Activated CD4-positive, alpha-beta T cell treated with anti-CD3 and anti-CD28 coated beads for 36 hours (primary cell): ENCODE measurements at regions of chr16 and their contacts with region 1.

Region 1: DNA sequence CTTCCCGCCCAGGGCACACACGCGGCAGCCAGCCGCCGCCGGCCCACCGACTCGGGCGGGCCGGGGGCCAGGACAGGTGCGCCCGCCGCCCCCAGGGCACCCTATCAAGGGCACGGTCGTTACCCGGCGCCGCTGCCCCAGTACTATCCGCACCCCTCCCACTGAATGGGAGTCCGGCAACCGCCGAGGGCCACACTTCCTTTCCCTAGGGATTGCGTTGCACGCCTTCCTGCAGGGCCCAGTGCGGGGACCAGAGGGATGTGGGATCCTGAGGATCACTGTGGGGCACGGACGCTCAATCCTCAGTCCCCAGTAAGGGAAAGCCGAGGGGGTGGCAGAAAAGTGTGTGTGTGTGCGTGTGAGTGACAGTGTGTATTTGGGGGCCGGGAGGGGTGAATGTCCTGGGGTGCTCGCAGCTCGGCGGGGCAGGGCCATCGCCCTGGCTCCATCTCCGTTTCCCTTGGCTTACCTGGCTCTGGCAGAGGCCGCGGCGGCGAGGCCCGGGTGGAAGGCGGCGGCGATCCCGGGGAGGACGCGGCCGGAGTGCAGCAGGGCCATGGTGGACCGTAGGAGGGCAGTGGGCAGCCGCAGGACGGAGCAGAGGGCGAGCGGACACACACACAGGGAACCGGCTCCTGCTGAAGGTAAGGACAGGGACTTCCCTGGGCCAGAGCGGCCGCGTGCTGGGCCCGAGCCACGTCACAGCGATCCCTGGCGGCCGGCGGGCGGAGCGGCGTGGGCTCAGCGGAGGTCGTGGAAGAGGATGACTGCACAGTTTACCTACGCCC is at the start of gene GOT2:
- DNase-seq: peak; percentile 90
- ATAC-seq: peak; percentile 92
- H3K4me3 Mint-ChIP-seq: peak within 1 kb of the TSS; percentile 92
- H3K27ac Mint-ChIP-seq: peak within 1 kb of the TSS; percentile 97
- H3K4me1 Mint-ChIP-seq: peaks cover 42% of the 10 kb centered on the region
- H3K27me3 Mint-ChIP-seq: no peaks in the 10 kb centered on the region
- total RNA-seq, gene GOT2: 128 to 133 TPM

Region 2: GRCh38 chr16:58198022-58198683 is 535.7 kb before region 1 on chr16 and contains the start of gene CSNK2A2:
- CTCF ChIA-PET with region 1: no interaction called
- POLR2A ChIA-PET with region 1: no interaction called
- intact Hi-C with region 1: loop called in 1 of 2 experiments (anchors 10 kb)
- DNase-seq: peak; percentile 84
- ATAC-seq: peak; percentile 94
- H3K4me3 Mint-ChIP-seq: peak within 1 kb of the TSS; percentile 84
- H3K27ac Mint-ChIP-seq: peak within 1 kb of the TSS; percentile 74
- H3K4me1 Mint-ChIP-seq: peaks cover 34% of the 10 kb centered on the region
- H3K27me3 Mint-ChIP-seq: peaks cover 6% of the 10 kb centered on the region
- total RNA-seq, gene CSNK2A2: 85.9 to 92.2 TPM

Region 3: GRCh38 chr16:58249780-58250478 is 483.9 kb before region 1 on chr16:
- CTCF ChIA-PET with region 1: no interaction called
- POLR2A ChIA-PET with region 1: no interaction called
- intact Hi-C with region 1: loop called in 1 of 2 experiments (anchors 5 kb)
- DNase-seq: peak; percentile 92
- ATAC-seq: peak; percentile 98
- H3K4me3 Mint-ChIP-seq: peak overlapping the region; percentile 81
- H3K27ac Mint-ChIP-seq: peak overlapping the region; percentile 85
- H3K4me1 Mint-ChIP-seq: peaks cover 8% of the 10 kb centered on the region
- H3K27me3 Mint-ChIP-seq: no peaks in the 10 kb centered on the region

Region 4: DNA sequence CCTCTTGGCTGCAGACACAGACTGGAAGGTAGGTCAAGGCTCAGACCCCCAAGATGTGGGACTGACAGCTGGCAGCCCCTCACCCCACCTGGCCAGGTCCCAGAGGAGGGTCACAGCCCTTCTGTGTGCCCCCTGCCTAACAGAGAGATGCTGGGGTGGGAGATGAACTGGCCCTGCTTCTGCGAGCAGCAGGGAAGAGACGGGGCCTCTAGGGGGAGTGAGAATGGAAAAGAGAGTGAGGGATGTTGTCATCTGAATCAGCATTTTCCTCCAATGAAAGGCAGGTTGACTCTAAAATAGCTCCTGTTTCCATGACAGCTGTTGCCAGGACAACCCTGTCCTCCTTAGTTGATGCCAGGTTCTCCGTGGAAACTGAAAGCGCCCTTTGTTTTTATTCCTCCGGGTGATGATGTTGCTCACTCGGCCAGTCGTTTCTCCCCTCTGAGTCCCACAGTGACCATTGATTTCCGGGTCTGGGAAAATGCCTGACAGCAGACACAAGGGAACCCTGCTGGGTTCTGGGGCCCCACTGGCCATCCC is 238.8 kb before region 1 on chr16:
- CTCF ChIA-PET with region 1: interaction called, 3 read pairs
- POLR2A ChIA-PET with region 1: no interaction called
- intact Hi-C with region 1: loop called in 1 of 2 experiments (anchors 1 kb)
- DNase-seq: peak; percentile 91
- ATAC-seq: peak; percentile 76
- H3K4me3 Mint-ChIP-seq: peak overlapping the region; percentile 17
- H3K27ac Mint-ChIP-seq: peak overlapping the region; percentile 37
- H3K4me1 Mint-ChIP-seq: peaks cover 19% of the 10 kb centered on the region
- H3K27me3 Mint-ChIP-seq: no peaks in the 10 kb centered on the region

Region 5: GRCh38 chr16:58684354-58685083 is 49.3 kb before region 1 on chr16 and contains the start of gene SLC38A7:
- CTCF ChIA-PET with region 1: interaction called, 4 read pairs
- POLR2A ChIA-PET with region 1: no interaction called
- intact Hi-C with region 1: loop called in 1 of 2 experiments (anchors 1 kb)
- DNase-seq: peak; percentile 88
- ATAC-seq: peak; percentile 93
- H3K4me3 Mint-ChIP-seq: peak within 1 kb of the TSS; percentile 86
- H3K27ac Mint-ChIP-seq: peak within 1 kb of the TSS; percentile 74
- H3K4me1 Mint-ChIP-seq: peaks cover 19% of the 10 kb centered on the region
- H3K27me3 Mint-ChIP-seq: no peaks in the 10 kb centered on the region
- total RNA-seq, gene SLC38A7: 4.5 to 6.5 TPM

Region 6: GRCh38 chr16:58755989-58756649 is 22.3 kb after region 1 on chr16:
- CTCF ChIA-PET with region 1: interaction called, 10 read pairs
- POLR2A ChIA-PET with region 1: no interaction called
- intact Hi-C with region 1: loop called (anchors 1 kb)
- DNase-seq: peak; percentile 90
- ATAC-seq: peak; percentile 97
- H3K4me3 Mint-ChIP-seq: no peak overlapping the region
- H3K27ac Mint-ChIP-seq: no peak overlapping the region
- H3K4me1 Mint-ChIP-seq: peaks cover 7% of the 10 kb centered on the region
- H3K27me3 Mint-ChIP-seq: no peaks in the 10 kb centered on the region